ENCODE measurements at regions of chr20 and their contacts with region 1.

Region 1: GRCh38 chr20:64062596-64063388 is at the start of gene TCEA2:
- DNase-seq: peak; percentile 96 to 100 (median 99)

Region 2: GRCh38 chr20:63955827-63956663 is 106.7 kb before region 1 on chr20 and contains the start of gene UCKL1:
- intact Hi-C with region 1: loop called (anchors 5 kb)
- DNase-seq: peak; percentile 80 to 96 (median 91)

Region 3: GRCh38 chr20:64101731-64102621 is 39.2 kb after region 1 on chr20:
- intact Hi-C with region 1: no loop called
- DNase-seq: peak in 26 of 42 donors; percentile 3 to 67 (median 26)